ENCODE measurements at regions of chr14 and their contacts with region 1.

Region 1: GRCh38 chr14:61269321-61270083 is 11.6 kb downstream of the TMEM30B start:
- DNase-seq: peak; percentile 45 to 77 (median 61)
- ATAC-seq: peak; percentile 48 to 88 (median 73)
- H3K4me3 ChIP-seq: peak overlapping the region in 10 of 12 donors; percentile 16 to 46 (median 34)
- H3K27ac ChIP-seq: no peak overlapping the region
- H3K4me1 ChIP-seq: peaks cover 0 to 8% (median 0%) of the 10 kb centered on the region in 12 donors
- H3K27me3 ChIP-seq: peaks cover 0 to 37% (median 5%) of the 10 kb centered on the region in 9 donors
- CTCF ChIP-seq: peak; percentile 63 to 81 (median 76)
- POLR2A ChIP-seq: no peak

Region 2: GRCh38 chr14:61287196-61287595 is 17.7 kb after region 1 on chr14:
- intact Hi-C with region 1: loop called in 1 of 10 experiments (anchors 2 kb)
- DNase-seq: no peak
- ATAC-seq: no peak
- H3K4me3 ChIP-seq: no peak overlapping the region
- H3K27ac ChIP-seq: no peak overlapping the region
- H3K4me1 ChIP-seq: peaks cover 0 to 7% (median 0%) of the 10 kb centered on the region in 12 donors
- H3K27me3 ChIP-seq: peaks cover 0 to 19% (median 0%) of the 10 kb centered on the region in 9 donors
- CTCF ChIP-seq: no peak
- POLR2A ChIP-seq: no peak

Measured in heart left ventricle (tissue), 16 donors.